PC-9 (cell line): ENCODE measurements at regions of chr17 and their contacts with region 1.

Region 1: DNA sequence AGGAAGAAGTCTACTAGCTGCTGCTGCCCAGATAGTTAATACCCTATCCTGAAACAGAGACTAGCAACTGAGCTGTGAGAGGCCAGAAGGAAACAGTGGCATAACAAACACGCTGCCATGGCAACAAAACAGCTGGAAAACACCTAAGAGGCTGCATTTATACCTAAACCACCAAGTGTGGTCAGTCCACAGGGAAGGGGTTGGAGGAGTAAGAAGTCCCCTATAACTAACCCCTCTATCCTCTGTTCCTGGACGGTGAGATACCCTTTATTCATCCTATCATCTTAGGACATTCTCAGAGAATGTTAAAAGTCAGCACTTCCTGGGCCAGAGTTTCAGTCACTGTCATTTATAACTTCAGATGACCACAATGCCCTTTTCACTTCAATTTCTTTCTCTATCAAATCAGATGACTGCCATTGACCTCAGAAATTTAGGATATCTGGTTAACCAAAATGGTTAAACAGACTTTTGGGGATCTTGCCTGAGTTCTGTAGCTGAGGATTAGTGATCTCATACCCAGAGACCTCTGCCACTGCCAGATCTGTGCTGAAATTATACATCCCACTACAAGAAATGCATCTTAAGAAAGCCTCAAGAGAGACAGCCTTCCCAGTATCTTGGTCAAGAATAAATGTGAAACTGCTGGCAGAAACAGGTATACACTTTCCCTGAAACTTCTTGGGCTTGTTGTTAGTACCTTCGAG is 36.2 kb downstream of the STH start:
- DNase-seq: peak in 1 of 2 experiments; percentile 11
- H3K4me3 ChIP-seq: no peak overlapping the region
- H3K27ac ChIP-seq: no peak overlapping the region
- H3K4me1 ChIP-seq: no peaks in the 10 kb centered on the region
- H3K27me3 ChIP-seq: no peaks in the 10 kb centered on the region
- CTCF ChIP-seq: no peak

Region 2: GRCh38 chr17:44990994-44991393 is 1044.3 kb before region 1 on chr17:
- CTCF ChIA-PET with region 1: no interaction called
- POLR2A ChIA-PET with region 1: interaction called, 10 read pairs
- intact Hi-C with region 1: no loop called
- DNase-seq: peak in 1 of 2 experiments; percentile 37
- H3K4me3 ChIP-seq: no peak overlapping the region
- H3K27ac ChIP-seq: no peak overlapping the region
- H3K4me1 ChIP-seq: peaks cover 8% of the 10 kb centered on the region; the same call in 1 of the 2 replicates
- H3K27me3 ChIP-seq: peaks cover 10% of the 10 kb centered on the region; the same call in 1 of the 2 replicates
- CTCF ChIP-seq: no peak